ENCODE measurements at regions of chr16 and their contacts with region 1.

Region 1: DNA sequence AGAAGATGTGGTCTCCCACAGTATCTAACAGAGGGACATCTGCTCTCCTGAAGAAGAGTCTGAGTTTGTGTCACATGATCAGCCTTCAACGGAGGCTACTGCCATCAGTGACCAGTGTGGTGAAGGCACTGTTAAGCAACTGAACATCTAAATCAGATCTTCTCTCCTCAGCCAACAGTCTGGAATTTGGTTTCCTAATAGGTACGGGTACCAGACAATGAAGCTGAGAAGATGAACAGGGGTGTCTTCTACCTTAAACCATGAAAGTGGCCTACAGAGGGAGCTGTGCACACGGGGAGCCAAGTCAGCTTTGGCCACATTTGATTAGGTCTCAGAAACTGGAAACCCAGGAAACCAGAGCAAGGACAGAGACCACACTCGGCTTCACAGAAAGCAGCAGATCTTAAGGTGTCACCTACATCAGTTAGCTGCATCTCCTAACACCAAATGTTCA is 41.8 kb downstream of the BRD7 start:
- DNase-seq: peak; percentile 68
- H3K4me3 Mint-ChIP-seq: no peak overlapping the region
- H3K27ac Mint-ChIP-seq: no peak overlapping the region
- H3K4me1 Mint-ChIP-seq: peaks cover 45% of the 10 kb centered on the region
- H3K27me3 Mint-ChIP-seq: no peaks in the 10 kb centered on the region

Region 2: DNA sequence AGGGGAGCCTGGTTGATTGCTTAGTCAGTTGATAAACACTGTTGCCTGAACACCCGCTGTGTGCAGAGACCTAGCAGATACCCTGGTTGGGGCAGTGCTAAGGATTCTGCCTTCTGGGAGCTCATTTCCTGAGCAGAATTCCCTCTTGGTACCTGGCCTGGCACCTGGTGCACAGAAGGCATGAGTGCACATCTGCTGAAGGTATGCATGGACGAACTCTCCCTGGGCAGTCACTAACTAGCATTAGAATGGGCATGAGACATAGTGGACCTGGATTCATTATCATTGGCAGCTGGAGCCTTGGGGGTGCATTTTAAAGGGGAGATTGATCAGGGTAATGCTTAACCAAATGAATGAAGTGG is 47.5 kb before region 1 on chr16:
- intact Hi-C with region 1: loop called (anchors 2 kb)
- DNase-seq: no peak
- H3K4me3 Mint-ChIP-seq: peak overlapping the region; percentile 0
- H3K27ac Mint-ChIP-seq: no peak overlapping the region
- H3K4me1 Mint-ChIP-seq: peaks cover 86% of the 10 kb centered on the region
- H3K27me3 Mint-ChIP-seq: no peaks in the 10 kb centered on the region

Region 3: GRCh38 chr16:50354629-50355456 is 27.9 kb after region 1 on chr16:
- intact Hi-C with region 1: loop called (anchors 1 kb)
- DNase-seq: no peak
- H3K4me3 Mint-ChIP-seq: no peak overlapping the region
- H3K27ac Mint-ChIP-seq: no peak overlapping the region
- H3K4me1 Mint-ChIP-seq: peaks cover 29% of the 10 kb centered on the region
- H3K27me3 Mint-ChIP-seq: no peaks in the 10 kb centered on the region

Region 4: GRCh38 chr16:50509521-50510341 is 182.8 kb after region 1 on chr16:
- intact Hi-C with region 1: loop called (anchors 2 kb)
- DNase-seq: peak; percentile 15
- H3K4me3 Mint-ChIP-seq: no peak overlapping the region
- H3K27ac Mint-ChIP-seq: no peak overlapping the region
- H3K4me1 Mint-ChIP-seq: no peaks in the 10 kb centered on the region
- H3K27me3 Mint-ChIP-seq: peaks cover 10% of the 10 kb centered on the region

Measured in activated T-helper 1 cell treated with anti-CD3 and anti-CD28 coated beads, Interleukin-12 subunit alpha, Interleukin-12 subunit beta, Interleukin-2, Interleukin-4 antibody, amounts not matched to agents 30 ng/mL and 10 ng/mL and 1 ng/mL, durations not matched to agents 14 hours and 24 hours and 36 hours (primary cell).